Naive thymus-derived CD4-positive, alpha-beta T cell (primary cell): ENCODE measurements at regions of chr1 and their contacts with region 1.

Region 1: DNA sequence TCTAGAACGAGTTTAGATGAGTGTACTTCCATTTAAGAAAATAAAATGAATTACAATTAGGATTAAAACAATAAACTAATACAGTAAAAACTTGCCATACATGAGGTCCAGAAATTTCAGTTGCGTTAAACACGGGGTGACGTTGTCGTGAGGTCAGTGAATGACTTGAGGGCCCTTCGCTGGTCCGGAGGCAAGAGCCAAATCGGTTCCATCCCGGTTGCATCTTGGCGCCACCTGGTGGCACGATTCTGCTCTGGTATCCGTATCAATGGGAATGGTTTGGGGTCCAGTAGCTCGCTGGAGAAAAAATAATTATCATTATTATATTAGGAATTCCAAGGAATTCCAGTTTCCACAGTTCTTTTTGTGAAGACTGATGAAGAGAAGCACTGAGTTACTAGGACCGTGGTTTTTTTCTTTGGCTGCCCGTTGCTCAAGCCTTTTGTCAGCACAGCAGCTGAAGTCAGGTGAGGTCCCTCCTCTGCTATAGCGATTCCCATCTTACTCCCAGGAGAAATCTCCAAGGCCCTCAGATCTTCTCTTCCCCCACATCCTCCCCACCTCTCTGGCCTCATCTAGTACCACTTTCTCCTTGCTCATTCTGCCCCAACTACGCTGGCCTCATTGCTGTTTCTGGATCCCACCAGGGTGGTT is 161.4 kb downstream of the SLC35F3 start:
- DNase-seq: peak; percentile 22 to 70 (median 40)
- ATAC-seq: no peak
- H3K4me3 ChIP-seq: no peak overlapping the region
- H3K4me3 Mint-ChIP-seq: no peak overlapping the region
- H3K27ac ChIP-seq: no peak overlapping the region
- H3K27ac Mint-ChIP-seq: no peak overlapping the region
- H3K4me1 ChIP-seq: no peaks in the 10 kb centered on the region
- H3K4me1 Mint-ChIP-seq: no peaks in the 10 kb centered on the region
- H3K27me3 ChIP-seq: no peaks in the 10 kb centered on the region
- H3K27me3 Mint-ChIP-seq: peaks cover 5 to 29% (median 10%) of the 10 kb centered on the region in 5 donors

Region 2: DNA sequence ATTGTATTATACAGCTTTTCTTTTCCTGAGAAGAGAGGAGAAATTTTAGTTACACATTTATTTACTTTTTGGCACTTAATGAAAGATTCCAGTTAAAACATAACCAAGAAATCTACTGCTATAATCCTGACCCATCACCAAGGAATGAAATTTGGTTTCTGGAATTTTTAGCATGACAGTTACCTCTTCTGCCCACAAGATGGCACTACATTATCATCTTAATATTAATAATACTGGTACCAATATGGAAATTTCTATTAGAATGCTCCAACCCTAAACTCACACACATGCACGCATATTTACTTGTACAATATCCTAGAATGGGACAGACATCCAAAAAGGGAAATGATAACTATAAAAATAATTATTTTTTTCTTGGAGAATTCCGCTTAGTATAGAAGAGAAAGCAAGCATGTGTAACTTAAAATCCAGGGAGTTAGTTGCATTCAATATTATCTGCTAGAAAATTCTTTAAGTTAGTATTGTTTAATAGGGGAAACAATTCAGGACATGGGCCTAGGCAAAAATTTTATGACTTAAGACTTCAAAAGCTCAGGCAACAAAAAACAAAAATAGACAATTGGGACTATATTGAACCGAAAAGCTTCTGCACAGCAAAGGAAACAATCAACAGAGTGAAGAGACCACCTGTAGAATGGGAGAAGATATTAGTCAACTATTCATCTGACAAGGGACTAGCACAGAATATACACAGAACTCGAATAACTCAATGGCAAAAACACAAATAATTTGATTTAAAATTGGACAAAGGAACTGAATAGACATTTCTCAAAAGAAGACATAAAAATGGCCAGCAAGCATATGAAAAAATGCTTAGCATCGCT is 701.0 kb before region 1 on chr1:
- CTCF ChIA-PET with region 1: interaction called, 3 read pairs
- POLR2A ChIA-PET with region 1: no interaction called
- intact Hi-C with region 1: loop called in 1 of 2 experiments (anchors 1 kb)
- DNase-seq: peak in 1 of 9 donors; percentile 7
- ATAC-seq: no peak
- H3K4me3 ChIP-seq: no peak overlapping the region
- H3K4me3 Mint-ChIP-seq: no peak overlapping the region
- H3K27ac ChIP-seq: no peak overlapping the region
- H3K27ac Mint-ChIP-seq: no peak overlapping the region
- H3K4me1 ChIP-seq: no peaks in the 10 kb centered on the region
- H3K4me1 Mint-ChIP-seq: no peaks in the 10 kb centered on the region
- H3K27me3 ChIP-seq: no peaks in the 10 kb centered on the region
- H3K27me3 Mint-ChIP-seq: peaks cover 2 to 9% (median 8%) of the 10 kb centered on the region in 5 donors

Region 3: DNA sequence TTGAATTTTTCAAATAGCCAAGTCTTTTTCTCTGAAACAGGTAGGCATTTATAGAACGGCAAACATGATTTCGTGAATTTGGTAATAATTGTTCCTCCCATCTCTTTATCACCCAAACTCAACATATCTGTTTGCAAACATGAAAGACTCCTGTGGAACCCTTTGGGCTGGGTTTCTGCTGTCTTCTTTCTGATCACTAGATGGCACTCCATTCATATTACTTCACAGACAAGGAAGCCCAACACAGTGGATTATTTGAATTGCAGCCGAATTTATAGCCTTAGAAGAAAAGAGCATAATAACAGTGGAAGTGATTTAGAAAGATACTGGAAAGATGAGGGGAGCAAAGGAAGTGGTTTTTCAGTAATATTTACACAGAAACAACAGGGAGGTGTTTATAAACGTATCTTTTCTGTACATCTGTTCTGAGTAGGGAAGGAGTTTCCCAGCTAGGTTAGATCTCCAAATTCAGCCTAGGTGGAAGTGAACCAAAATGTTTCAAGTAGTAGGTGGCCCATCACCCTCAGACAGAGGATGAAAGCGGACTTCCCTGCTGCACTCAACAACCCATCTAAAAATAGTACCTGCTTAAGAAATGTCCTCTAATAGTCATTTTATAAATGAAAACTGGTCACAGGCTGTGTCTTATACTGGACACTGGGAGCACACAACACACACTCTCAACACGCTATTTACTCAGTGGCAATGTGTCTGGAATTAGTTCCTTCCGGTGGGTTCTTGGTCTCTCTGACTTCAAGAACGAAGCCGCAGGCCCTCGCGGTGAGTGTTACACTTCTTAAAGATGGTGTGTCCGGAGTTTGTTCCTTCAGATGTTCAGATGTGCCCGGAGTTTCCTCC is 670.8 kb before region 1 on chr1:
- CTCF ChIA-PET with region 1: no interaction called
- POLR2A ChIA-PET with region 1: no interaction called
- intact Hi-C with region 1: loop called in 1 of 2 experiments (anchors 1 kb)
- DNase-seq: peak in 5 of 9 donors; percentile 9 to 36 (median 17)
- ATAC-seq: peak; percentile 61
- H3K4me3 ChIP-seq: no peak overlapping the region
- H3K4me3 Mint-ChIP-seq: no peak overlapping the region
- H3K27ac ChIP-seq: no peak overlapping the region
- H3K27ac Mint-ChIP-seq: no peak overlapping the region
- H3K4me1 ChIP-seq: no peaks in the 10 kb centered on the region
- H3K4me1 Mint-ChIP-seq: no peaks in the 10 kb centered on the region
- H3K27me3 ChIP-seq: peaks cover 0 to 3% of the 10 kb centered on the region in 2 donors
- H3K27me3 Mint-ChIP-seq: peaks cover 27 to 45% (median 38%) of the 10 kb centered on the region in 5 donors

Region 4: GRCh38 chr1:234235434-234235881 is 169.5 kb after region 1 on chr1:
- CTCF ChIA-PET with region 1: no interaction called
- POLR2A ChIA-PET with region 1: no interaction called
- intact Hi-C with region 1: no loop called
- DNase-seq: no peak
- ATAC-seq: no peak
- H3K4me3 ChIP-seq: no peak overlapping the region
- H3K4me3 Mint-ChIP-seq: no peak overlapping the region
- H3K27ac ChIP-seq: no peak overlapping the region
- H3K27ac Mint-ChIP-seq: no peak overlapping the region
- H3K4me1 ChIP-seq: no peaks in the 10 kb centered on the region
- H3K4me1 Mint-ChIP-seq: peaks cover 4 to 21% (median 5%) of the 10 kb centered on the region in 7 donors
- H3K27me3 ChIP-seq: no peaks in the 10 kb centered on the region
- H3K27me3 Mint-ChIP-seq: peaks cover 0 to 34% (median 13%) of the 10 kb centered on the region in 5 donors